T-cell (primary cell): ENCODE measurements at regions of chr11 and their contacts with region 1.

Region 1: GRCh38 chr11:124844664-124845079 is 20.6 kb upstream of the ROBO3 start:
- DNase-seq: no peak
- ATAC-seq: no peak
- H3K4me3 ChIP-seq: no peak overlapping the region
- H3K4me3 Mint-ChIP-seq: no peak overlapping the region
- H3K27ac ChIP-seq: no peak overlapping the region
- H3K27ac Mint-ChIP-seq: no peak overlapping the region
- H3K4me1 ChIP-seq: peaks cover 2 to 11% of the 10 kb centered on the region in 2 experiments
- H3K4me1 Mint-ChIP-seq: peaks cover 7 to 16% (median 11%) of the 10 kb centered on the region in 3 donors
- H3K27me3 ChIP-seq: peaks cover 42 to 71% of the 10 kb centered on the region in 2 experiments
- H3K27me3 Mint-ChIP-seq: peaks cover 78 to 95% of the 10 kb centered on the region in 2 donors

Region 2: DNA sequence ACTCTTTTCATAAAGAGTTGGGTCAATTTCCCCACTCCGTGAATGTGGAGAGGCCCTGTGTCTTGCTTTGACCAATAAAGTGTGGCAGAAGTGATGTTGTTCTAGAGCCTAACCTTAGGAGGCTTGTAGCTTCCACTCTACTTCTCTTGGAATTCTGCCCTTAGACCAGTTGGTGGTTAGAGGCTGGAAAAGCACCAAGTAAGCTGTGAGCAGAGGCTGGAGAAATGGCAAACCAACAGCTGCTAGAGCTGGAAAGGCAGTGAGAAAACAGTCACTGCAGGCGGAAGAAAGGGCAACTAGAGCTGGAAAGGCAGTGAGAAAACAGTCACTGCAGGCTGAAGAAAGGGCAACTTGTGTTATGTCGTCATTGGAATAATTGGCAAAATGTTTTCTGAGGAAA is 14.7 kb before region 1 on chr11:
- CTCF ChIA-PET with region 1: no interaction called
- POLR2A ChIA-PET with region 1: interaction called in 1 of 2 experiments, 10 read pairs
- DNase-seq: no peak
- ATAC-seq: no peak
- H3K4me3 ChIP-seq: no peak overlapping the region
- H3K4me3 Mint-ChIP-seq: no peak overlapping the region
- H3K27ac ChIP-seq: no peak overlapping the region
- H3K27ac Mint-ChIP-seq: no peak overlapping the region
- H3K4me1 ChIP-seq: no peaks in the 10 kb centered on the region
- H3K4me1 Mint-ChIP-seq: no peaks in the 10 kb centered on the region
- H3K27me3 ChIP-seq: peaks cover 0 to 4% of the 10 kb centered on the region in 2 experiments
- H3K27me3 Mint-ChIP-seq: peaks cover 22 to 30% of the 10 kb centered on the region in 2 donors

Region 3: GRCh38 chr11:124865921-124866583 is 21.4 kb after region 1 on chr11:
- CTCF ChIA-PET with region 1: no interaction called
- POLR2A ChIA-PET with region 1: no interaction called
- DNase-seq: peak in 27 of 35 experiments; percentile 12 to 69 (median 38)
- ATAC-seq: peak; percentile 51 to 74 (median 62)
- H3K4me3 ChIP-seq: peak overlapping the region in 1 of 2 donors; percentile 29
- H3K4me3 Mint-ChIP-seq: peak overlapping the region in 2 of 3 donors; percentile 39 to 44
- H3K27ac ChIP-seq: no peak overlapping the region
- H3K27ac Mint-ChIP-seq: no peak overlapping the region
- H3K4me1 ChIP-seq: peaks cover 0 to 47% of the 10 kb centered on the region in 2 experiments
- H3K4me1 Mint-ChIP-seq: peaks cover 52 to 56% (median 52%) of the 10 kb centered on the region in 3 donors
- H3K27me3 ChIP-seq: peaks cover 28 to 98% of the 10 kb centered on the region in 2 experiments
- H3K27me3 Mint-ChIP-seq: peaks cover 74 to 94% of the 10 kb centered on the region in 2 donors